Naive thymus-derived CD4-positive, alpha-beta T cell (primary cell): ENCODE measurements at regions of chr2 and their contacts with region 1.

Region 1: DNA sequence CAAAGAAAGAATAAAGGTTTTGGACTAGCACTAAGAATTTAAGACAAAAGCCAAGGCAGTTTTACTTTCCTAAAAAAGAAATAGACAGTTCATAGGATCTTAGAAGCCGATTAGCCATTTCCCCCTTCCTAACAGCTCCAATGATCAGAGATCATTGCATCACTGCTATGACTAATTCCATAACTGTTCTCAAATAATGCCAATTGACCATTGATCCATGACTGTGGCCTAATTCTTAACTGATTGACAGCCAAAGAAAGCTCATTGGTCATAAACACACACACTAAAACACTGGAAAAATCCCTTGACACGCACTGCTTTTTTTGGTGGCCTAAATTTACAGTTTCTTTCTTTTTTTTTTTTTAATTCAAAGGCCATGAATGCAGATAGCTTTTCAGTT is 345.0 kb upstream of the ACVR2A start:
- DNase-seq: no peak
- ATAC-seq: no peak
- H3K4me3 ChIP-seq: no peak overlapping the region
- H3K4me3 Mint-ChIP-seq: peak overlapping the region in 9 of 10 donors; percentile 40 to 80 (median 65)
- H3K27ac ChIP-seq: no peak overlapping the region
- H3K27ac Mint-ChIP-seq: peak overlapping the region in 8 of 9 donors; percentile 24 to 93 (median 65)
- H3K4me1 ChIP-seq: peaks cover 9 to 13% of the 10 kb centered on the region in 2 donors
- H3K4me1 Mint-ChIP-seq: peaks cover 23 to 61% (median 35%) of the 10 kb centered on the region in 7 donors
- H3K27me3 ChIP-seq: no peaks in the 10 kb centered on the region
- H3K27me3 Mint-ChIP-seq: no peaks in the 10 kb centered on the region

Region 2: GRCh38 chr2:147198651-147199171 is 301.1 kb before region 1 on chr2:
- CTCF ChIA-PET with region 1: no interaction called
- POLR2A ChIA-PET with region 1: no interaction called
- intact Hi-C with region 1: loop called in 1 of 2 experiments (anchors 5 kb)
- DNase-seq: no peak
- ATAC-seq: no peak
- H3K4me3 ChIP-seq: no peak overlapping the region
- H3K4me3 Mint-ChIP-seq: no peak overlapping the region
- H3K27ac ChIP-seq: no peak overlapping the region
- H3K27ac Mint-ChIP-seq: no peak overlapping the region
- H3K4me1 ChIP-seq: no peaks in the 10 kb centered on the region
- H3K4me1 Mint-ChIP-seq: no peaks in the 10 kb centered on the region
- H3K27me3 ChIP-seq: no peaks in the 10 kb centered on the region
- H3K27me3 Mint-ChIP-seq: peaks cover 0 to 10% (median 4%) of the 10 kb centered on the region in 5 donors

Region 3: GRCh38 chr2:147297820-147298219 is 202.0 kb before region 1 on chr2:
- CTCF ChIA-PET with region 1: no interaction called
- POLR2A ChIA-PET with region 1: no interaction called
- intact Hi-C with region 1: loop called in 1 of 2 experiments (anchors 5 kb)
- DNase-seq: peak in 7 of 9 donors; percentile 13 to 63 (median 32)
- ATAC-seq: peak; percentile 76
- H3K4me3 ChIP-seq: no peak overlapping the region
- H3K4me3 Mint-ChIP-seq: peak overlapping the region in 8 of 10 donors; percentile 9 to 53 (median 38)
- H3K27ac ChIP-seq: no peak overlapping the region
- H3K27ac Mint-ChIP-seq: peak overlapping the region; percentile 53 to 94 (median 85)
- H3K4me1 ChIP-seq: peaks cover 18 to 26% of the 10 kb centered on the region in 2 donors
- H3K4me1 Mint-ChIP-seq: peaks cover 10 to 60% (median 29%) of the 10 kb centered on the region in 7 donors
- H3K27me3 ChIP-seq: no peaks in the 10 kb centered on the region
- H3K27me3 Mint-ChIP-seq: peaks cover 0 to 17% (median 0%) of the 10 kb centered on the region in 5 donors

Region 4: DNA sequence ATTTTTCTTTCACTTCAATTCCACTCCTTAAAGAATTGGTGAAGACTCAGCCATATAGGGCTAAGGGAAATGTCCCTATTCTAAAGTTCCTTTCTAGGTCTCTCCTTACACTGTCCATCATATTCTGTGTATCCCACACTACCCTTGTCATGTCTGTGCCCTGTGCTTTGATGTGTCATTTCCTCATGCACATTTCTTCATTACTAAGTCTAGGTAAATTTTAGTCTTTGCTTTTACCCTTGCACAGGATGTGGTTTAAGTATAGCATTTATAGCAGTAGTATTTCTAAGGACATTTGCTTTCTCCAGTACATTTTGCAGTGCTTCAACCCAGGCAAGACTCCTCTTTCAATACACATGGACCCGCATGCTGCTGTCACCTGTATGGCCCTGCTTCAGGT is 123.5 kb after region 1 on chr2:
- CTCF ChIA-PET with region 1: no interaction called
- POLR2A ChIA-PET with region 1: no interaction called
- intact Hi-C with region 1: loop called in 1 of 2 experiments (anchors 2 kb)
- DNase-seq: peak in 7 of 9 donors; percentile 12 to 64 (median 41)
- ATAC-seq: peak; percentile 88
- H3K4me3 ChIP-seq: no peak overlapping the region
- H3K4me3 Mint-ChIP-seq: peak overlapping the region; percentile 1 to 63 (median 37)
- H3K27ac ChIP-seq: no peak overlapping the region
- H3K27ac Mint-ChIP-seq: peak overlapping the region; percentile 4 to 76 (median 36)
- H3K4me1 ChIP-seq: peaks cover 0 to 23% of the 10 kb centered on the region in 2 donors
- H3K4me1 Mint-ChIP-seq: peaks cover 12 to 36% (median 25%) of the 10 kb centered on the region in 7 donors
- H3K27me3 ChIP-seq: no peaks in the 10 kb centered on the region
- H3K27me3 Mint-ChIP-seq: no peaks in the 10 kb centered on the region

Region 5: GRCh38 chr2:147663153-147663961 is 163.6 kb after region 1 on chr2:
- CTCF ChIA-PET with region 1: no interaction called
- POLR2A ChIA-PET with region 1: no interaction called
- intact Hi-C with region 1: loop called in 1 of 2 experiments (anchors 1 kb)
- DNase-seq: peak in 7 of 9 donors; percentile 10 to 75 (median 58)
- ATAC-seq: peak; percentile 91
- H3K4me3 ChIP-seq: peak overlapping the region; percentile 48
- H3K4me3 Mint-ChIP-seq: peak overlapping the region; percentile 61 to 87 (median 82)
- H3K27ac ChIP-seq: peak overlapping the region; percentile 68
- H3K27ac Mint-ChIP-seq: peak overlapping the region; percentile 87 to 100 (median 93)
- H3K4me1 ChIP-seq: peaks cover 7 to 23% of the 10 kb centered on the region in 2 donors
- H3K4me1 Mint-ChIP-seq: peaks cover 17 to 59% (median 46%) of the 10 kb centered on the region in 7 donors
- H3K27me3 ChIP-seq: no peaks in the 10 kb centered on the region
- H3K27me3 Mint-ChIP-seq: no peaks in the 10 kb centered on the region